ENCODE measurements at regions of chr22 and their contacts with region 1.

Region 1: DNA sequence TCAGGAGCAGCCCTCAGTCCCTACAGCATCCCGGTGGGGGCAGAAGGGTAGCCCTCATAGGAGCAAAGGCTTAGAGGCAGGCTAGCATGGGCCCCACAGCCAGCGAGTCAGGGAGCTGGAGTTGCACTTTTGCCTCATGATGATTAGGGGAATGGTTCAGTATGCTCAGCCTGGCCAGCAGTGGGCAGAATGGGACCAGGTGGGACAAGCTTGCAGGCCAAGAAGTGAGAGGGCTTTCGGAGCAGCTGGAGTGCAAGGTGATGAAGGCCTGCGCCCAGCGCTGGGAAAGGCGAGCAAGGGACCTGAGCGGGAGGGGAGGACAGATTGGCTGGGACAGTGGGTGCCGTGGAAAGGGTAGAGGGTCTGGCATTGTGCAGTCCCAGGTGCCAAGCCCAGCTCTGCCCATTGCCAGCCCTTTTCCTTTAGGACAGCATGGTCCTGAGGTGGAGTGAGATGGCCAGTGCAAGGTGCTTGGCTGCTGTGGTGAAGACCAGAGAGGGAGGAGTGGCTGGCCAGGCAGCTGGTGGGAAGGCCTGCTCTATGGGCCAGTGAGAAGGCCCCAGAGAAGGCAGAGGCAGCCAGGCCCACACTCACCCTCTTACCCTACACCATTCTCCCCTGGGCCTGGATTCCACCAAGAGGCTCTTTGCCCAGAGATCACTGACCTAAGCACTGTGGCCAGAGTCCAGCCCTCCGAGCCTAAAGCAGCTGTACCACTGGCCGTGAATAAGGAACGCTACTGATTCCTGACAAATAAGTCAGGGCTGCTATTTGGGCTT is 47.9 kb upstream of the SUSD2 start:
- DNase-seq: peak; percentile 37
- ATAC-seq: peak; percentile 40
- H3K4me3 Mint-ChIP-seq: no peak overlapping the region
- H3K27ac Mint-ChIP-seq: no peak overlapping the region
- H3K4me1 Mint-ChIP-seq: peaks cover 41% of the 10 kb centered on the region
- H3K27me3 Mint-ChIP-seq: no peaks in the 10 kb centered on the region
- CTCF ChIP-seq: no peak

Region 2: DNA sequence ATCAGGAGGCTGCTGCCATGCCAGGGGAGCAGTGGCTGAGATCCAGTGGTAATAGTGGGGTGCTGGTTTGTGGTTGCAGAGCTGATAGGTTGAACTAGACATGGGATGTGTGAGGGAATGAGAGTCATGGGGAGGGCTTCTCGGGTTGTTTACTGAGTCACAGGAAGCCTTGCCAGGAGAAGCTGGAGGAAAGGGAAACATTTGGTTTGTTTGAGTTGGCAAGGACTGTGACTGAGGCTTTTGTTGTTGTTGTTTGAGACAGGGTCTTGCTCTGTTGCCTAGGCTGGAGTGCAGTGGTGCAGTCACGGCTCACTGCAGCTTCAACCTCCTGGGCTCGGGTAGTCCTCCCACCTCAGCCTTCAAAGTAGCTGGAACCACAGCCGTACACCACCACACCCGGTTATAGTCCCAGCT is 73.0 kb before region 1 on chr22:
- CTCF ChIA-PET with region 1: no interaction called
- POLR2A ChIA-PET with region 1: no interaction called
- intact Hi-C with region 1: loop called (anchors 10 kb)
- DNase-seq: no peak
- ATAC-seq: no peak
- H3K4me3 Mint-ChIP-seq: no peak overlapping the region
- H3K27ac Mint-ChIP-seq: peak overlapping the region; percentile 59
- H3K4me1 Mint-ChIP-seq: peaks cover 12% of the 10 kb centered on the region
- H3K27me3 Mint-ChIP-seq: no peaks in the 10 kb centered on the region
- CTCF ChIP-seq: no peak

Region 3: GRCh38 chr22:24077416-24077815 is 56.0 kb before region 1 on chr22:
- CTCF ChIA-PET with region 1: no interaction called
- POLR2A ChIA-PET with region 1: no interaction called
- intact Hi-C with region 1: no loop called
- DNase-seq: no peak
- ATAC-seq: no peak
- H3K4me3 Mint-ChIP-seq: no peak overlapping the region
- H3K27ac Mint-ChIP-seq: no peak overlapping the region
- H3K4me1 Mint-ChIP-seq: no peaks in the 10 kb centered on the region
- H3K27me3 Mint-ChIP-seq: no peaks in the 10 kb centered on the region
- CTCF ChIP-seq: no peak

Region 4: GRCh38 chr22:24091551-24092420 is 41.6 kb before region 1 on chr22:
- CTCF ChIA-PET with region 1: no interaction called
- POLR2A ChIA-PET with region 1: no interaction called
- intact Hi-C with region 1: no loop called
- DNase-seq: no peak
- ATAC-seq: no peak
- H3K4me3 Mint-ChIP-seq: no peak overlapping the region
- H3K27ac Mint-ChIP-seq: no peak overlapping the region
- H3K4me1 Mint-ChIP-seq: peaks cover 4% of the 10 kb centered on the region
- H3K27me3 Mint-ChIP-seq: no peaks in the 10 kb centered on the region
- CTCF ChIP-seq: no peak

Region 5: DNA sequence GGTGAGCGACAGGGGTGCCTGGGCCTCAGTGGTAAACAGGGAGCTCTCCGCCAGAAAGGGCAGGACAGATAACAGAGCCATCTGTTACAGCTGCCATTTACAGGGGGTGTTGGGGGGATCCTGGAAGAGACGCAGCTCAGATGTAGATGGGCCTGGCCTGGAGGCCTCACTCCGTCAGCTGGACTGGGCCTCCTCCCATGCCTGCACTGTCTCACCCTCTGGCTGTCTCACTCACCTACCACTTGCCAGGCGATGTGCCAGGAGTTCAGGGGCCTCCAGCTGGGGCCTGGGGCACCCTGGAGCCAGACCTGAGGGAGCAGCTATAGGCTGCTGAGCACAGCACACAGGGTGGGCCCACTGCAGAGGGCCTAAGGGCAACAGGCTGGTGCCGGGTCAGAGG is 31.6 kb after region 1 on chr22:
- CTCF ChIA-PET with region 1: no interaction called
- POLR2A ChIA-PET with region 1: no interaction called
- intact Hi-C with region 1: no loop called
- DNase-seq: no peak
- ATAC-seq: no peak
- H3K4me3 Mint-ChIP-seq: no peak overlapping the region
- H3K27ac Mint-ChIP-seq: no peak overlapping the region
- H3K4me1 Mint-ChIP-seq: peaks cover 54% of the 10 kb centered on the region
- H3K27me3 Mint-ChIP-seq: no peaks in the 10 kb centered on the region
- CTCF ChIP-seq: no peak

Region 6: DNA sequence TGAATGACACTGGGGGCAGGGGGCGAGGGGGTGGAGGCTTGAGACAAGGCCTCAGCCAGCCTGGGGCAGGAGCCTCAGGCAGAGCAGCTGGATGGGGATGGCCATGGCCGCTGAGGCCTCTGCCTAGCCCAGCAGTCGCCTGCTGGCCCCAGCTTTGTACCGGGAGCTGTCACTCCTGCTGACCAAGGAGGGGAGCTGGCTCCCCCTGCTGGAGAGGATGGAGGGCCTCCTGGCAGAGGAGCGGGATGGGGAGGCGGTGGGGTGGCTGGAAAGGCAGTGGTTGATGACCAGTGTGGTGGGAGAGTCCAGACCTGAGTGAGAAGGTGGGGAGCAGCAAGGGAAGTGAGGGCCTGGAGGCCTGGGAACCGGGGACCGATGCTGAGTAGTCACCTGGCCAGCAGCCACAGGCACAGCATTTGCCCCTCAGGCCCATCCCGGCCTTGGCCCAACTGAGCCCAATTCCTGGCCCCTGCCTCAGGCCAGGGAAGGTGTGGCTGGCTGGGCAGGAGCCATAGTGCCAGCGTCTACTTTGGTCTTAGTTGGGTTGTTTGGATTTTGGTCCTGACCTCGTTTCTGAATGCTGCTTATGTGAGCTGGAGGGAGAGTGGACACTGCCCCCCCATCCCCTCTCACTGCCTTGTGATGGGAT is 41.9 kb after region 1 on chr22:
- CTCF ChIA-PET with region 1: interaction called, 30 read pairs
- POLR2A ChIA-PET with region 1: no interaction called
- intact Hi-C with region 1: no loop called
- DNase-seq: peak; percentile 73
- ATAC-seq: peak; percentile 69
- H3K4me3 Mint-ChIP-seq: no peak overlapping the region
- H3K27ac Mint-ChIP-seq: peak overlapping the region; percentile 5
- H3K4me1 Mint-ChIP-seq: peaks cover 4% of the 10 kb centered on the region
- H3K27me3 Mint-ChIP-seq: no peaks in the 10 kb centered on the region
- CTCF ChIP-seq: peak; percentile 72